CD8-positive, alpha-beta memory T cell (primary cell): ENCODE measurements at regions of chr16 and their contacts with region 1.

Region 1: GRCh38 chr16:85821441-85822135 is 22.1 kb downstream of the COX4I1 start:
- DNase-seq: peak; percentile 63 to 80 (median 67)
- H3K4me3 ChIP-seq: no peak overlapping the region
- H3K4me3 Mint-ChIP-seq: no peak overlapping the region
- H3K27ac ChIP-seq: no peak overlapping the region
- H3K27ac Mint-ChIP-seq: no peak overlapping the region
- H3K4me1 ChIP-seq: peaks cover 5% of the 10 kb centered on the region
- H3K4me1 Mint-ChIP-seq: peaks cover 0 to 12% (median 8%) of the 10 kb centered on the region in 3 donors
- H3K27me3 ChIP-seq: no peaks in the 10 kb centered on the region
- H3K27me3 Mint-ChIP-seq: peaks cover 4 to 5% of the 10 kb centered on the region in 2 donors

Region 2: DNA sequence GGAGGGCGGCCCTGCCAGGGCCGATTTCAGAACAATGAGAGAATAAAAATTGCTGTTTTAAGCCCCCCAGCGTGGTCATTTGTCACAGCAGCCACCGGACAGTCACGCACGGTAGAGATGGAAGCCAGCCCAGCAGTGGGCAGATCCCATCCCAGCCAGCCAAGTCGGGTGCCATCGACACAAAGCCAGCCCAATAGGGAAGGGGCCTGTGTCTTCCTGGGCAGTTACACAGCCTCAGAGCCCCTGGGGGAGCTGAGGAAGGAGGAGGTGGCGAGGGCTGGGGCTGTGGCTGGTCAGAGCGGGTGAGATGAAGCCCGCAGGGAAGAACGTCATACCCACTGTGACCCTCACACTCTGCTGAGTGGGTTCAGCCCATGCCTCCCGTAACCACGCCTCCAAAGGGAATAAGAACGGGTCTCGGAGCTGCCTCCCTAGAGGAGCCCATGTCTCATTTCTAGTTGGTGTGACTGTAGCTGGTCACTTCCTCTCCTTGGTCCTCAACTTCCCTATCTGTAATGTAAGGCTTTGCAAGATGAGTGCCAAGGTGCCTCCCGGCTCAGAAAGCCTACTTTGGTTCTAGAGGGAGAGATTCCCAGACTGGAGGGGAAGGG is 91.6 kb before region 1 on chr16:
- CTCF ChIA-PET with region 1: no interaction called
- POLR2A ChIA-PET with region 1: no interaction called
- DNase-seq: no peak
- H3K4me3 ChIP-seq: no peak overlapping the region
- H3K4me3 Mint-ChIP-seq: no peak overlapping the region
- H3K27ac ChIP-seq: no peak overlapping the region
- H3K27ac Mint-ChIP-seq: peak overlapping the region in 1 of 8 donors; percentile 36
- H3K4me1 ChIP-seq: peaks cover 15% of the 10 kb centered on the region
- H3K4me1 Mint-ChIP-seq: peaks cover 7 to 27% (median 8%) of the 10 kb centered on the region in 3 donors
- H3K27me3 ChIP-seq: no peaks in the 10 kb centered on the region
- H3K27me3 Mint-ChIP-seq: no peaks in the 10 kb centered on the region

Region 3: GRCh38 chr16:85898521-85899442 is 77.2 kb after region 1 on chr16 and contains the start of gene IRF8:
- CTCF ChIA-PET with region 1: interaction called, 11 read pairs
- POLR2A ChIA-PET with region 1: no interaction called
- DNase-seq: peak; percentile 46 to 75 (median 64)
- H3K4me3 ChIP-seq: peak within 1 kb of the TSS; percentile 63
- H3K4me3 Mint-ChIP-seq: peak within 1 kb of the TSS; percentile 80 to 90 (median 85)
- H3K27ac ChIP-seq: no peak within 1 kb of the TSS
- H3K27ac Mint-ChIP-seq: peak within 1 kb of the TSS in 4 of 8 donors; percentile 27 to 77 (median 70)
- H3K4me1 ChIP-seq: peaks cover 34% of the 10 kb centered on the region
- H3K4me1 Mint-ChIP-seq: peaks cover 38 to 51% (median 43%) of the 10 kb centered on the region in 3 donors
- H3K27me3 ChIP-seq: peaks cover 3% of the 10 kb centered on the region
- H3K27me3 Mint-ChIP-seq: peaks cover 13 to 35% of the 10 kb centered on the region in 2 donors
- total RNA-seq, gene IRF8: 19.2 to 22.0 TPM

Region 4: DNA sequence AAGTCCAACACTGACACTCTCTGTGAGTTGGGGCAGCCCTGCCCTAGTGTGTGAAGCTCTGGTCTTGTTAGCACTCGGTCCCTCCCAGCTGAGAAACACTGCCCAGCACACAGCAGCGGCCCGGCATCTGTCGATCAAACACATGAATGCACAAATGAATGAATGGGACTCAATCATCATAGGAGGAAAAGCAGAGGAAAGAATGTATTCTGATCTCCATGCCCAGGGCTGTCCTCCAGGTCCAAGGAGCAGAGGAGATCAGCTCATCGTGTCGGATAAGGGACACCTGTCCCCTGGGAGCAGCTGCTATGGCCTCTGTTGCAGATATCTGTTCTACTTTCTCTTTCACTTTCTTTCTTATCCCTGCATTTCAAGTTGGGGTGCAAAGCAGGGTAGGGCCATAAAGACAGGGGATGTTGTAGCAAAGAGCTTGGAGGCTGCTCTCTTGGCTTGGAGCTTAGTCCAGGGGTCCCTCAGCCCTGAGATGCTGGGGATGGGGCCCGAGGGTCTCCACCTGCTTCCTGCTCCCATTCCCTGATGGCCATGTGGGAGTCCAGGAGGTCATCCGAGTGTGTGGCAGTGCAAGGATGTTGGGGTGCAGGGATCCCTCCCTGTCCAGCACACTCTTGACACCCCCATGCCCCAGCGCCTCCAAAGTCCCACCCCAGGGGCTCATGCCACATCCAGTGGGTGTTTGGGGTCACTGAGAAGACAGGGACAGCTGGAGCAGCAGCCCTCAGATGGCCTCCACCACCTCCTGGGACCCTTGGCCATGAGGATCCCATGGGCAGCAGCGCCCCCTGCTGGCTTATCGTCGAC is 165.6 kb after region 1 on chr16:
- CTCF ChIA-PET with region 1: interaction called, 307 read pairs
- POLR2A ChIA-PET with region 1: interaction called, 3 read pairs
- DNase-seq: peak in 4 of 5 donors; percentile 16 to 47 (median 18)
- H3K4me3 ChIP-seq: no peak overlapping the region
- H3K4me3 Mint-ChIP-seq: peak overlapping the region in 4 of 7 donors; percentile 21 to 79 (median 61)
- H3K27ac ChIP-seq: no peak overlapping the region
- H3K27ac Mint-ChIP-seq: peak overlapping the region in 2 of 8 donors; percentile 64 to 82
- H3K4me1 ChIP-seq: peaks cover 6% of the 10 kb centered on the region
- H3K4me1 Mint-ChIP-seq: peaks cover 24 to 47% (median 43%) of the 10 kb centered on the region in 3 donors
- H3K27me3 ChIP-seq: peaks cover 4% of the 10 kb centered on the region
- H3K27me3 Mint-ChIP-seq: peaks cover 8 to 18% of the 10 kb centered on the region in 2 donors

Region 5: GRCh38 chr16:86002178-86002900 is 180.8 kb after region 1 on chr16:
- CTCF ChIA-PET with region 1: interaction called, 11 read pairs
- POLR2A ChIA-PET with region 1: no interaction called
- DNase-seq: no peak
- H3K4me3 ChIP-seq: no peak overlapping the region
- H3K4me3 Mint-ChIP-seq: no peak overlapping the region
- H3K27ac ChIP-seq: no peak overlapping the region
- H3K27ac Mint-ChIP-seq: no peak overlapping the region
- H3K4me1 ChIP-seq: no peaks in the 10 kb centered on the region
- H3K4me1 Mint-ChIP-seq: peaks cover 7 to 23% (median 14%) of the 10 kb centered on the region in 3 donors
- H3K27me3 ChIP-seq: no peaks in the 10 kb centered on the region
- H3K27me3 Mint-ChIP-seq: no peaks in the 10 kb centered on the region

Region 6: GRCh38 chr16:86016201-86016871 is 194.7 kb after region 1 on chr16:
- CTCF ChIA-PET with region 1: interaction called, 80 read pairs
- POLR2A ChIA-PET with region 1: no interaction called
- DNase-seq: peak in 3 of 5 donors; percentile 10 to 33 (median 32)
- H3K4me3 ChIP-seq: no peak overlapping the region
- H3K4me3 Mint-ChIP-seq: peak overlapping the region in 1 of 7 donors; percentile 40
- H3K27ac ChIP-seq: no peak overlapping the region
- H3K27ac Mint-ChIP-seq: no peak overlapping the region
- H3K4me1 ChIP-seq: no peaks in the 10 kb centered on the region
- H3K4me1 Mint-ChIP-seq: no peaks in the 10 kb centered on the region
- H3K27me3 ChIP-seq: peaks cover 6% of the 10 kb centered on the region
- H3K27me3 Mint-ChIP-seq: peaks cover 27 to 46% of the 10 kb centered on the region in 2 donors